Endothelial cell of umbilical vein (primary cell): ENCODE measurements at regions of chr17 and their contacts with region 1.

Region 1: GRCh38 chr17:35849469-35850348 is 19.0 kb downstream of the HEATR9 start:
- DNase-seq: peak; percentile 65
- H3K4me3 ChIP-seq: no peak overlapping the region
- H3K27ac ChIP-seq: no peak overlapping the region
- H3K4me1 ChIP-seq: no peaks in the 10 kb centered on the region
- H3K27me3 ChIP-seq: no peaks in the 10 kb centered on the region
- CTCF ChIP-seq: peak; percentile 68 to 75
- POLR2A ChIP-seq: no peak

Region 2: GRCh38 chr17:35870906-35871819 is 21.5 kb after region 1 on chr17:
- CTCF ChIA-PET with region 1: interaction called, 13 read pairs
- POLR2A ChIA-PET with region 1: no interaction called
- dilution Hi-C with region 1: no loop called
- intact Hi-C with region 1: no loop called
- DNase-seq: no peak
- H3K4me3 ChIP-seq: no peak overlapping the region
- H3K27ac ChIP-seq: no peak overlapping the region
- H3K4me1 ChIP-seq: peaks cover 22% of the 10 kb centered on the region
- H3K27me3 ChIP-seq: no peaks in the 10 kb centered on the region
- CTCF ChIP-seq: no peak
- POLR2A ChIP-seq: no peak

Region 3: GRCh38 chr17:35947156-35947585 is 97.5 kb after region 1 on chr17:
- CTCF ChIA-PET with region 1: interaction called, 3 read pairs
- POLR2A ChIA-PET with region 1: no interaction called
- dilution Hi-C with region 1: no loop called
- intact Hi-C with region 1: loop called (anchors 10 kb)
- DNase-seq: peak; percentile 51
- H3K4me3 ChIP-seq: no peak overlapping the region
- H3K27ac ChIP-seq: no peak overlapping the region
- H3K4me1 ChIP-seq: no peaks in the 10 kb centered on the region
- H3K27me3 ChIP-seq: peaks cover 0 to 4% of the 10 kb centered on the region in 2 experiments
- CTCF ChIP-seq: peak; percentile 64 to 82
- POLR2A ChIP-seq: no peak

Region 4: DNA sequence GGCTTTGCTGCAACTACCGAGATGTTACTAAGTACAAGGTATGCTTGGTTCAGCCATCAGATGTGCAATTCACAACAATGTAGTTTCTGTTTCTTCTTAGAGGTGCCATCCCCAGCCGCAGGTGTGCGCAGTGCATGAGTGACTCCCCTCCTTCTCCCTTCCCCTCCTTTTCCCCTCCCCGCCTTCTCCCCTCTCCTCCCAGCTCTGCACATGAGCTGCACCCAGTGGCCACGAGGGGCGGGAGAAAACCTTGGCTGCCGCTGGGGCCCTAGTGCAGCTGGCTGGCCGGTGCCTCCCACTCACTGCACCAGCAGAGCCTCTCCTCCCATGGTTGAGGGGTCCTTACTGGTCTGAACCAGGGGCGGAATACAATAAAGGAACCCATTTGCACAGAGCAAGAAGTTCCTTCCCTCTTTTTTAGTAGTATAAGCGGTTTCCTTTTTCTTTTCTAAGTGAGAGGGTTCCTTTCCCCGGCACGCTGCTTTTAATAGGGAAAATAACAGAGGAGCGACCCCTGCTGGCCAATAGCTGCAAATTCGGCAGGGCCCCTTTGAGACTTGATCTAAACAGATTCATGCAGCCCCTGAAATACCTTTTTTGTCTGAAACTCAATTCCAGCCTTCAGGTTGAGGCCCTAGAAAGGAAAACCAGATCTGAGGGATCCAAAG is 159.4 kb after region 1 on chr17:
- CTCF ChIA-PET with region 1: interaction called, 5 read pairs
- POLR2A ChIA-PET with region 1: no interaction called
- dilution Hi-C with region 1: no loop called
- intact Hi-C with region 1: loop called (anchors 1 kb)
- DNase-seq: peak; percentile 36
- H3K4me3 ChIP-seq: no peak overlapping the region
- H3K27ac ChIP-seq: no peak overlapping the region
- H3K4me1 ChIP-seq: no peaks in the 10 kb centered on the region
- H3K27me3 ChIP-seq: no peaks in the 10 kb centered on the region
- CTCF ChIP-seq: peak; percentile 49 to 82
- POLR2A ChIP-seq: no peak

Region 5: GRCh38 chr17:36148559-36149295 is 299.0 kb after region 1 on chr17:
- CTCF ChIA-PET with region 1: interaction called, 31 read pairs
- POLR2A ChIA-PET with region 1: no interaction called
- dilution Hi-C with region 1: no loop called
- intact Hi-C with region 1: loop called (anchors 1 kb)
- DNase-seq: peak; percentile 67
- H3K4me3 ChIP-seq: no peak overlapping the region
- H3K27ac ChIP-seq: no peak overlapping the region
- H3K4me1 ChIP-seq: no peaks in the 10 kb centered on the region
- H3K27me3 ChIP-seq: peaks cover 7 to 8% of the 10 kb centered on the region in 2 experiments
- CTCF ChIP-seq: peak; percentile 93 to 99
- POLR2A ChIP-seq: no peak